ENCODE measurements at regions of chr1 and their contacts with region 1.

Region 1: GRCh38 chr1:53982034-53982762 is 35.8 kb downstream of the LDLRAD1 start:
- DNase-seq: peak; percentile 52
- ATAC-seq: peak; percentile 93
- H3K4me3 ChIP-seq: peak overlapping the region; percentile 27; the same call in 1 of the 2 replicates
- H3K27ac ChIP-seq: peak overlapping the region; percentile 4; the same call in 1 of the 2 replicates
- H3K4me1 ChIP-seq: peaks cover 2% of the 10 kb centered on the region; the same call in 1 of the 2 replicates
- H3K27me3 ChIP-seq: no peaks in the 10 kb centered on the region
- CTCF ChIP-seq: no peak
- POLR2A ChIP-seq: no peak
- RAD21 ChIP-seq: no peak

Region 2: GRCh38 chr1:53959664-53960250 is 22.4 kb before region 1 on chr1:
- CTCF ChIA-PET with region 1: no interaction called
- POLR2A ChIA-PET with region 1: no interaction called
- dilution Hi-C with region 1: no loop called
- in situ Hi-C with region 1: no loop called
- intact Hi-C with region 1: no loop called
- DNase-seq: no peak
- ATAC-seq: no peak
- H3K4me3 ChIP-seq: no peak overlapping the region
- H3K27ac ChIP-seq: no peak overlapping the region
- H3K4me1 ChIP-seq: peaks cover 16% of the 10 kb centered on the region
- H3K27me3 ChIP-seq: no peaks in the 10 kb centered on the region
- CTCF ChIP-seq: peak; percentile 49
- POLR2A ChIP-seq: no peak
- RAD21 ChIP-seq: peak; percentile 53

Region 3: DNA sequence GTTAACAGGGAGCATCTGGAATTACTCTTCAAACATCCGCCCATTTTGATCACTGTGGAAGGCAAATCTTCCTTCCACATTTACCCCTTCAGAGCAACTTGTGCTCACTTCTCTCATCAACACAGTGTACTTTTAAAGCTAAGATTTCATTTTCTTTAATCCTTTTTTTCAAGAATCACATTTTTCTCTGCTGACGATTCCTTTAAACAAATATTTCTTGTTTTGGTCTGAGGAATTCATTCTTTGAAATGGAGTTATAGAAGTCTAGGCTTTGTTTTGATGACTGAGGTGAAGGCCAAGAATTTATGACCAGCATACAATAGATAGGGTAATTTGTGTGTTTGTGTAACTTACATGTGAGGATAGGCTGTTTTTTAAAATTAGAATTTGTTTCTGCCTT is 10.5 kb before region 1 on chr1:
- CTCF ChIA-PET with region 1: interaction called, 3 read pairs
- POLR2A ChIA-PET with region 1: no interaction called
- dilution Hi-C with region 1: no loop called
- in situ Hi-C with region 1: no loop called
- intact Hi-C with region 1: loop called (anchors 1 kb)
- DNase-seq: peak; percentile 78
- ATAC-seq: peak; percentile 84
- H3K4me3 ChIP-seq: no peak overlapping the region
- H3K27ac ChIP-seq: peak overlapping the region; percentile 86; the same call in 1 of the 2 replicates
- H3K4me1 ChIP-seq: peaks cover 11% of the 10 kb centered on the region
- H3K27me3 ChIP-seq: no peaks in the 10 kb centered on the region
- CTCF ChIP-seq: no peak
- POLR2A ChIP-seq: no peak
- RAD21 ChIP-seq: no peak

Region 4: DNA sequence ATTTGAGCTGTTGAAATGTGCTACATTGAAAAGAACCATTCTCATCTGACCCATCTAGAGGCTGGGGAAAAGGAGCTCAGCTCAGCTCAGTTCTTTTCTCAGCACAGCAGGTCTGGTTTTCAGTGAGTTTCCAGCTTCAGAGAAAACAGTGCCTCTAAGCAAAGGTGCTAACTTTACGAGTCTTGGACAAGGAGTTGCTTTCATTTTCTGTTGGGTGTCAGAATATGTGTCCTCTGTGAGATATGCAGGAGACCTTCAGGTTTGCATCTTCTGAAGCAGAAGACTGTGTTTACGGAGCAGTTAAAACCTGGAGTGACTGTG is 1554.3 kb after region 1 on chr1:
- CTCF ChIA-PET with region 1: no interaction called
- POLR2A ChIA-PET with region 1: no interaction called
- dilution Hi-C with region 1: no loop called
- in situ Hi-C with region 1: no loop called
- intact Hi-C with region 1: no loop called
- DNase-seq: no peak
- ATAC-seq: no peak
- H3K4me3 ChIP-seq: no peak overlapping the region
- H3K27ac ChIP-seq: peak overlapping the region; percentile 49; the same call in 1 of the 2 replicates
- H3K4me1 ChIP-seq: 0 out of 2 replicates have a peak, but pooled peaks cover 2% of the 10 kb centered on the region
- H3K27me3 ChIP-seq: no peaks in the 10 kb centered on the region
- CTCF ChIP-seq: no peak
- POLR2A ChIP-seq: no peak
- RAD21 ChIP-seq: no peak

Measured in IMR-90 (cell line).